ENCODE measurements at regions of chr2 and their contacts with region 1.

Region 1: DNA sequence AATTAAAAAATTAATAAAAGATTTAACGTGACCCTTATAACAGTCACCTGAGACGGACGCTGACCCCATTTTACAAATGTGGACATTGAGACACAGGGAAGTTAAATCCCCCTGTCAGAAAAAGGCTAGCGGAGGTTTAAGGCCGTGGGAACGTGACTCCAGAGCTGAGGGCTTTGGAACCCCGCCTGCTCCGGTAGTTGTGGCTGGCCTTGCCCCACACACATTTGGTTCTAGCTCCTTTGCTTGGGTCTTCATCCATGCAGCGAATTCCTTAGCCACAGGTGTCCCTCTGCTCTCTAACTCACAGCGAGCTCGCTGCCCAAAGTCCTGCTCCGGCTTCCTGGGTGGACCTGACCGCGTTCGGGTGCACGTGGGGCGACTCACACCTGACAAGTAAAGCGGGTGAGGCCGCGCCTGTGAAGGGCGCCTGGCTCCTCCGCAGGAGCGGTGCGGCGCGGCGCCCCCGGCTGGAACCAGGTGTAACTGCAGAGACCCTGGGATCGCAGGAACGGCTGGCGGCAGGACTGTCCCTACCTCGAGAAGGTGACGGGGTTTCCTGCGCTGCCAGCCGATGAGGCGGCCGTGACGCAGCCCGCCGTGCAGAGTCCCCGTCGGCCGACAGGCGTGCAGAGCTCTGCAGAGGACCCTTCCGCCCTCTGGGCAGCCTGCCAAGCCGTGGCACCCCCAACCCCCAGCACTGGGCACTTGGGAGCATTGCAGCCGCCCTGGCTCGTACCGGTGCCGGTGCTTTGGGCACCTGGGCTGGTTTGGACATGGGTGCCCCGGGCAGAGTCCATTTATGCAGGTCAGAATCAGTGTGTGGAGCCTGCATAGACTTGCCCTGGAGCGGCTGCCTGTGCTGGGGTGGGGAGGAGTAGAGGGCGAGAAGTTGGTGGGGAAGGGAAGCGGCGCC is 2.4 kb upstream of the PROC start:
- DNase-seq: peak; percentile 90
- ATAC-seq: peak; percentile 96
- H3K4me3 Mint-ChIP-seq: peak overlapping the region; percentile 69
- H3K27ac Mint-ChIP-seq: peak overlapping the region; percentile 69
- H3K4me1 Mint-ChIP-seq: peaks cover 32% of the 10 kb centered on the region
- H3K27me3 Mint-ChIP-seq: peaks cover 7% of the 10 kb centered on the region
- CTCF ChIP-seq: peak; percentile 85

Region 2: DNA sequence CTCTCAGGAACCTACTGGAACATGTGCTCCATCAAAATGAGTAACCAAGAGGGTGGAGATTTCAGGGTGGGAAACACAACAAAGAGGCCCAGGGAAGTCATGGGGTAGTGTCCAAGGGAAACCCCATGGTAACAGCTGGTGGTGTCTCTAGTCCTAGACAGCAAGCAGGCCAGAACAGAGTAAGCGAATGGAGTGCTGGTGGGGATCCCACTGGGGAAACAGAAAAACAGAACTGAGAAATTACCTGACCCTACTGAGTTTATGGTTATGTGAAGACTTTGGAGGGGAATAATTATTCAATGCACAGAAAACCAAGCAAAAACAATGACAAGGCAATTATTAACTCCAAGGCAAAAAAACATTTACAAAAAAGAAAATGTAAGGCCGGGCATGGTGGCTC is 138.8 kb before region 1 on chr2:
- CTCF ChIA-PET with region 1: no interaction called
- POLR2A ChIA-PET with region 1: no interaction called
- intact Hi-C with region 1: no loop called
- DNase-seq: no peak
- ATAC-seq: no peak
- H3K4me3 Mint-ChIP-seq: no peak overlapping the region
- H3K27ac Mint-ChIP-seq: peak overlapping the region; percentile 71
- H3K4me1 Mint-ChIP-seq: peaks cover 13% of the 10 kb centered on the region
- H3K27me3 Mint-ChIP-seq: no peaks in the 10 kb centered on the region
- CTCF ChIP-seq: no peak

Region 3: GRCh38 chr2:127348426-127349000 is 67.3 kb before region 1 on chr2:
- CTCF ChIA-PET with region 1: interaction called, 12 read pairs
- POLR2A ChIA-PET with region 1: no interaction called
- intact Hi-C with region 1: no loop called
- DNase-seq: no peak
- ATAC-seq: no peak
- H3K4me3 Mint-ChIP-seq: no peak overlapping the region
- H3K27ac Mint-ChIP-seq: peak overlapping the region; percentile 8
- H3K4me1 Mint-ChIP-seq: peaks cover 57% of the 10 kb centered on the region
- H3K27me3 Mint-ChIP-seq: no peaks in the 10 kb centered on the region
- CTCF ChIP-seq: no peak

Region 4: GRCh38 chr2:127365211-127365643 is 50.6 kb before region 1 on chr2:
- CTCF ChIA-PET with region 1: interaction called, 11 read pairs
- POLR2A ChIA-PET with region 1: no interaction called
- intact Hi-C with region 1: no loop called
- DNase-seq: no peak
- ATAC-seq: peak; percentile 53
- H3K4me3 Mint-ChIP-seq: no peak overlapping the region
- H3K27ac Mint-ChIP-seq: peak overlapping the region; percentile 9
- H3K4me1 Mint-ChIP-seq: peaks cover 59% of the 10 kb centered on the region
- H3K27me3 Mint-ChIP-seq: no peaks in the 10 kb centered on the region
- CTCF ChIP-seq: no peak

Region 5: DNA sequence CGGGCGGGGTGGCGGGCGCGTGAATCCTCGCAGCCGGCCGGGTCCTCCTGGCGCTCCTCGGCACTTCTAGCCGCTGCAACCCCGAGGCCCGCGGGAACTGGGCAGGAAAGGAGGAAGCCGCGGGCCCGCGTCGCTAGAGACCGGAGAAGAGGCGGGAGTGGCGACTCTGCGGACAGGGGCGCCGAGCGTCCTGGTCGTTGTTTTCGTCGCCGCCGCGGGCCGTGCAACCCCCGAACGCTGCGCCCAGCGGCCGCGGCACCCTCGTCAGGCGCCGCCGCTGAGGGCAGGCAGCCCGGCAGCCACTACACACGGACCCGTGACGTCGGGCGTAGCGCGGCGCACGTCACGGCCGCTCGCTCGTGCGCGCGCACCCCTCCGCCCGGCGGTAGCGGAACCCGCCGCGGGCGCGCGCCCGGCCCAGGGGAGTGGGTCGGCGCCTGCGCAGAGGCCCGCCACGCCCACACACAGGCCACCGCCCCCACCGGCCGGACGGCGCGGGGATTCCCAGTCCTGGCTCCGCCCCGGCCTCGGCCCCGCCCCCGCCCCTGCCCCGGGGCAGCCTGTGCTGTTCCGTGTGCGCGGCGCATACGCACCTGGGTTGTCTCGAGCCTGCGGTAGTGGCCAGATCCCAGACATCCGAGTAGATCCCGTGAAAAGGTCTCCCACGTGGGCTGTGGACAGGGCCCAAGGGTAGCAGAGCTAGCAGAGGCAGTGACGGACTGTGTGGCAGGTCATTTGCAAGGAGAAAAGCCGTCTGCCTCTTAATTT is 28.0 kb before region 1 on chr2 and contains the start of gene MAP3K2:
- CTCF ChIA-PET with region 1: interaction called, 13 read pairs
- POLR2A ChIA-PET with region 1: interaction called, 7 read pairs
- intact Hi-C with region 1: no loop called
- DNase-seq: peak; percentile 91
- ATAC-seq: peak; percentile 75
- H3K4me3 Mint-ChIP-seq: peak within 1 kb of the TSS; percentile 99
- H3K27ac Mint-ChIP-seq: peak within 1 kb of the TSS; percentile 95
- H3K4me1 Mint-ChIP-seq: peaks cover 67% of the 10 kb centered on the region
- H3K27me3 Mint-ChIP-seq: no peaks in the 10 kb centered on the region
- CTCF ChIP-seq: no peak
- total RNA-seq, gene MAP3K2: 54.7 to 55.5 TPM

Measured in activated CD8-positive, alpha-beta T cell treated with anti-CD3 and anti-CD28 coated beads for 36 hours (primary cell).